Right ventricle myocardium inferior (tissue), 1 donor: ENCODE measurements at regions of chr6 and their contacts with region 1.

Region 1: DNA sequence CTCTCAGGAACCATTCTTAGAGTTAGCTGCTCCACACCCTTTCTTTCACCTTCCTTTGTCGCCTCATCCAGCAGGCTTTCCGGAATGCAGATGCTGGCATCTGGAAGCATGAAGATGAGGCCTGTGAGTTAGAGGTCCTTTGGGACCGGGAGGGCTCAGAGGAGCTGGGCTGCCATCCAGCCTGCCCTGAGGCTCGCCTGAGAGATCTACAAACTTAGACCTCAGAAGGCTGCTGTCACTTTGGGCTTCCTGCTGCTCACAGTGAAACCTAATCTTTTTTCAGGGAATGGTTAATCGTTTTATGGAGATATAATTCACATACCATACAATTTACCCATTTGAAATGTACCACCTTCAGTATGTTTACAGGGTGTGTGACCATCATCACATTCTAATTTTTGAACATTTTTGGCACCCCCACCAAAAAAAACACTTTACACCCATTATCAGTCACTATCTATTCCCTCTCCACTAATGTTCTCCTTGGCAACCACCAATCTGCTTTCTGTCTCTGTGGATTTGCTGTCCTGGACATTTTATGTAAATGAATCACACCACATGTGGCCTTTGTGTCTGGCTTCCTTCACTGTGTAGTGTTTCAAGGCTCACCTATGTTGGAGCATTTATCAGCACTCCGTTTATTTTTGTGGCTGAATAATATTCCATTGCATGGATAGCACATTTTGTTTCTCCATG is 20.0 kb upstream of the MPC1 start:
- DNase-seq: no peak
- ATAC-seq: no peak

Region 2: DNA sequence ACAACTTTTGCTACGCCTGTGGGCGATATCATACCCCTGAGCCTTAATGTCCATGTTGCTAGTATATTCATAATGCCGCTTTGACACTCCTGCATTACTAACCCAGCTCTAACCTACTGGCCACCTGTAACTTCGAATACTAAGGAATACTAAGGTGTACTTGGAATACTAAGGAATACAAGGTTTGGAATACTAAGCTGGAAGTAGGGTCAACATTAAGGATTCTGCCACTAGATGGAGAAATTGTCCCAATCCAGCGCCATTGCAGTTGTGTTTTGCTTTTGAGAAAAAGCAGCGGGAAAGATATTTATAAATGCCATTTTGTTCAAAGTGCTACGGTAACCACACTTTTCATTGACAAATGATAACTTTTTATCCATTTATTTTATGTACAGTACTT is 245.8 kb before region 1 on chr6:
- intact Hi-C with region 1: loop called (anchors 5 kb)
- DNase-seq: no peak
- ATAC-seq: no peak

Region 3: GRCh38 chr6:166275714-166276166 is 127.0 kb before region 1 on chr6:
- intact Hi-C with region 1: loop called (anchors 2 kb)
- DNase-seq: peak; percentile 92
- ATAC-seq: peak; percentile 79

Region 4: GRCh38 chr6:166313255-166314070 is 89.3 kb before region 1 on chr6:
- intact Hi-C with region 1: loop called (anchors 1 kb)
- DNase-seq: no peak
- ATAC-seq: peak; percentile 74

Region 5: DNA sequence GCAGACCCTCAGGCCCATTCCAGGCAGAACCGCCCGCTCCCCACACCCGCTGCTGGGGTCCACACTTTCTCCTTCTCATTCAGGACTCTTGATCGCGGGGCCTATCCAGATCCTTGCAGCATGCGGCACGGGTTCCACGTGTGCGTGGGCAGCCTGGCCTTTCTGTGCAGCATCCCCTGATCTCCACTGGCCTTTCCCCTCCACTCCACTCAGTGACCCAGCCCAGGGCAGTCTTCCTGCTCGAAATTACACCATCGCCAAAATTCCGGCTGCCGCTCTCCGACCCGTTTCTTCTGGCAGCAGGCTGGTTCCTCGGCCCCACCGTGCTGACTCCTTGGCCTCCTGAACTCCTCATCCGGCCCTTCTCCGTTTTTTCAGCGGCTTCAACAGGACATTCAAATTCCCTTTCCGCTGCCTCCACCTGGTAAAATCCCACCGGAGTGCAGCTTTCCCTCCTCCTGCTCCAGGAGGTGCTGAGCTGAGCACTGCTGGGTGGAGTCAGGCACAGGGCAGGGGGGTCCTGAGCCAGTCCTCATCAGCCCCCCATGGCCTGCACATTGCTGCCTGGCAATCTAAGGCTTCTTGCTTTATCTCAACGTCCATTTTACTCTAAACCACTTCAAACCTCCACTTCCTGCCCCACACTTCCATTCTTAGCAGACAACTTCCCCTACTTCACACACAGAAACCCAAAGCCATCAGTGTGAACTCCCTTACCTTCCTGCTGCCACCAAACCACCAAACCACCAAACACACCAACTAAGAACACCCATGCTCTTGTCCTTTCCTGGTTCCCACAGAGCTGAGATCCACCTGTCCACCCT is 69.3 kb before region 1 on chr6:
- intact Hi-C with region 1: no loop called
- DNase-seq: no peak
- ATAC-seq: no peak

Region 6: GRCh38 chr6:166862287-166862977 is 459.7 kb after region 1 on chr6:
- intact Hi-C with region 1: no loop called
- DNase-seq: no peak
- ATAC-seq: peak; percentile 50